ENCODE measurements at regions of chr18 and their contacts with region 1.

Region 1: DNA sequence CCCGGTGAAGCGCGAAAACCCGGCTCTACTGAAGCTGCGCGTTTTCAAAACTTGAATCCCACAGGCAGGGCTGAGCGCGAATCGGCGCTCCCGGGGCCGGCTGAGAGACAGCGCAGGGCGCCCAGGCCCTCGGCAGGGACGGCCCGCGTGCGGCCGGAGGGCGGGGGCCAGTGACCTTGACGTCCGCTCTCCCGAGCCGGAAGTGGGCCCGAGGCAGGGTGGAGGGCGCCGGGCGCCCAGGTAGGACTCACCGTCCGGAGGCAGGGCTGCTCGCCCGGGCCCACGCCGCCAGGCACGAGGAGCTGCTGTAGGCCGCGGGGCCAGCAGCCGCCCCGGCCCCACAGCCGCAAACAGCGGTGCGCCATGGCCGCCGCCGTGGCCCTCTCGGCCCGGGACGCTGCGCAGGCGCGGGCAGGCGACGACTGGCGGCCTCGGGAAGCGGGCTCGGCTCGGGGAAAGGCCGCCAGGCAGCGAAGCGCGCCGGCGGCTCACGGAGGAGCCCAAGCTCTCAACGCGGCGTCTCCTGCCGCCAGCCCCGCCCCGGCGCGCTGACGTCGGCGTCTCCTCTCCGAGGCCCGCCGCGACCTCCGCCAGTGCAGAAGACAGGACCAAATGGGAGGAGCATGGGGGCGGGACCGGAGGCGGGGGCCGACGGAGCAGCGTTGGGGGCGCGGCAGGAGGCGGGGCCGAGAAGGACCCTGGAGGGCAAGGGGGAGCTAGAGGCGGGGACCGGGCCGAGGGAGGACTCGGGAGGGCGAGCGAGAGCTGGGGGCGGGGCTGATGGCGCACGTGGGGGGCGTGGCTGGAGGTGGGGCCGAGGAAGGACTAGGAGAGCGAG is at the start of gene AFG3L2:
- DNase-seq: peak; percentile 99
- H3K4me3 ChIP-seq: peak within 1 kb of the TSS; percentile 86
- H3K27ac ChIP-seq: peak within 1 kb of the TSS; percentile 98
- H3K4me1 ChIP-seq: peaks cover 9% of the 10 kb centered on the region
- H3K27me3 ChIP-seq: no peaks in the 10 kb centered on the region
- CTCF ChIP-seq: no peak; the same call in 1 of the 2 replicates
- total RNA-seq, gene AFG3L2: 63.7 and 72.7 TPM in 2 replicates

Region 2: GRCh38 chr18:12236934-12237832 is 139.8 kb before region 1 on chr18:
- CTCF ChIA-PET with region 1: interaction called, 12 read pairs
- POLR2A ChIA-PET with region 1: no interaction called
- intact Hi-C with region 1: no loop called
- DNase-seq: peak; percentile 75
- H3K4me3 ChIP-seq: no peak overlapping the region
- H3K27ac ChIP-seq: no peak overlapping the region
- H3K4me1 ChIP-seq: no peaks in the 10 kb centered on the region
- H3K27me3 ChIP-seq: peaks cover 13% of the 10 kb centered on the region
- CTCF ChIP-seq: peak; percentile 97

Region 3: GRCh38 chr18:12406371-12407111 is 29.6 kb after region 1 on chr18:
- CTCF ChIA-PET with region 1: no interaction called
- POLR2A ChIA-PET with region 1: no interaction called
- intact Hi-C with region 1: loop called (anchors 2 kb)
- DNase-seq: no peak
- H3K4me3 ChIP-seq: no peak overlapping the region
- H3K27ac ChIP-seq: no peak overlapping the region
- H3K4me1 ChIP-seq: peaks cover 18% of the 10 kb centered on the region
- H3K27me3 ChIP-seq: peaks cover 8% of the 10 kb centered on the region
- CTCF ChIP-seq: no peak

Measured in A673 (cell line).